Naive thymus-derived CD4-positive, alpha-beta T cell (primary cell): ENCODE measurements at regions of chr16 and their contacts with region 1.

Region 1: GRCh38 chr16:69754469-69755310 is at the start of gene NOB1:
- DNase-seq: peak; percentile 96 to 98 (median 97)
- ATAC-seq: peak; percentile 97
- H3K4me3 ChIP-seq: peak within 1 kb of the TSS; percentile 91
- H3K4me3 Mint-ChIP-seq: peak within 1 kb of the TSS; percentile 98 to 100 (median 100)
- H3K27ac ChIP-seq: peak within 1 kb of the TSS; percentile 89
- H3K27ac Mint-ChIP-seq: peak within 1 kb of the TSS; percentile 92 to 100 (median 98)
- H3K4me1 ChIP-seq: peaks cover 13 to 17% of the 10 kb centered on the region in 2 donors
- H3K4me1 Mint-ChIP-seq: peaks cover 23 to 36% (median 26%) of the 10 kb centered on the region in 7 donors
- H3K27me3 ChIP-seq: no peaks in the 10 kb centered on the region
- H3K27me3 Mint-ChIP-seq: peaks cover 0 to 7% (median 0%) of the 10 kb centered on the region in 5 donors
- total RNA-seq, gene NOB1: 24.1 to 72.8 (median 45.0) TPM

Region 2: GRCh38 chr16:69339289-69340108 is 415.2 kb before region 1 on chr16 and contains the starts of genes COG8 and NIP7:
- CTCF ChIA-PET with region 1: no interaction called
- POLR2A ChIA-PET with region 1: no interaction called
- intact Hi-C with region 1: loop called in 1 of 2 experiments (anchors 1 kb)
- DNase-seq: peak; percentile 78 to 91 (median 90)
- ATAC-seq: peak; percentile 95
- H3K4me3 ChIP-seq: peak within 1 kb of the TSS; percentile 80
- H3K4me3 Mint-ChIP-seq: peak within 1 kb of the TSS; percentile 97 to 100 (median 99)
- H3K27ac ChIP-seq: peak within 1 kb of the TSS; percentile 86
- H3K27ac Mint-ChIP-seq: peak within 1 kb of the TSS; percentile 95 to 99 (median 98)
- H3K4me1 ChIP-seq: peaks cover 20 to 25% of the 10 kb centered on the region in 2 donors
- H3K4me1 Mint-ChIP-seq: peaks cover 31 to 70% (median 49%) of the 10 kb centered on the region in 7 donors
- H3K27me3 ChIP-seq: no peaks in the 10 kb centered on the region
- H3K27me3 Mint-ChIP-seq: no peaks in the 10 kb centered on the region
- total RNA-seq, gene COG8: 29.5 to 73.7 (median 37.4) TPM
- total RNA-seq, gene NIP7: 22.1 to 40.9 (median 30.3) TPM

Region 3: DNA sequence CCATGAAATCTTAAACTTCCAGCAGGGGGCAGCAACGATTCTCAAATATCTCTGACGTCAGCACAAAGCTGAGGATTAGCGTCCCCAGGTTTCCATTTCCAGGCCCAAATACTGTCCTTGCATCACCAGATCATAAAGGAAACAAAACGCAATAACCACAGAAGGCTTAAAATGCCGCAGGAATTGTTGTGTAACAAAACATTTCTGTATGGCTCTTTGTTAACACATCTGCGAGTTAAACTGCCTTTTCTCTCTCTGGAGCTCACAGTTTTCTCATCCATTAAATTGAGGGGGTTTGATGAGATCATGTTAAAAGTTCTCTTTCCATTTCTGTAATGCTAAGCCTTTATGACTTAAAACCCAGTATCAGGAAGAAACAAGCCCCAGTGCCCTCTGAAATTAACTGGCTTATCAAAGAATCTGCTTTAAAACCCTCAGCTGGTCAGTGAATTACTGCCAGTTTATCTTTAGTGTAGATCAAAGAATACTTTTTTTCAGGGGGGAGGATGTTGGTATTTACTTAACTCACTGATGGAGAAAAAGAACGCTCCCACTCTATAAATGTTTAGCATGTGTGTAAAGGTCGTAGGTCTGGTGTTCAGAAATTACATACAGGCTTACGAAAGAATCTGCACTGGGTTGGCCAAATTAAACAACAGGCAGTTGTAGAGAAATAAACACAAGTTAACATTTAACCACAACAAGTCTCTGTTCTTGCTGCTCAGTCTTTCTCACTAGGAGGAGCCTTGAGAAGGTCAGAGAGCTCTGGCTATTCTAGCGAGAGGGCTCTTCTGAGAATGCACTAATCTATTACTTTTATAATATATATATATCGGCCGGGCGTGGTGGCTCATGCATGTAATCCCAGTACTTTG is 358.3 kb before region 1 on chr16:
- CTCF ChIA-PET with region 1: interaction called, 9 read pairs
- POLR2A ChIA-PET with region 1: interaction called, 8 read pairs
- intact Hi-C with region 1: loop called in 1 of 2 experiments (anchors 1 kb)
- DNase-seq: peak; percentile 23 to 73 (median 66)
- ATAC-seq: peak; percentile 86
- H3K4me3 ChIP-seq: no peak overlapping the region
- H3K4me3 Mint-ChIP-seq: peak overlapping the region in 3 of 10 donors; percentile 26 to 57 (median 50)
- H3K27ac ChIP-seq: peak overlapping the region; percentile 22
- H3K27ac Mint-ChIP-seq: peak overlapping the region; percentile 8 to 76 (median 41)
- H3K4me1 ChIP-seq: peaks cover 0 to 3% of the 10 kb centered on the region in 2 donors
- H3K4me1 Mint-ChIP-seq: peaks cover 0 to 17% (median 5%) of the 10 kb centered on the region in 7 donors
- H3K27me3 ChIP-seq: no peaks in the 10 kb centered on the region
- H3K27me3 Mint-ChIP-seq: peaks cover 0 to 11% (median 0%) of the 10 kb centered on the region in 5 donors

Region 4: GRCh38 chr16:69424053-69424934 is 330.4 kb before region 1 on chr16 and contains the start of gene CYB5B:
- CTCF ChIA-PET with region 1: no interaction called
- POLR2A ChIA-PET with region 1: no interaction called
- intact Hi-C with region 1: loop called (anchors 1 to 10 kb)
- DNase-seq: peak; percentile 72 to 98 (median 96)
- ATAC-seq: peak; percentile 98
- H3K4me3 ChIP-seq: peak within 1 kb of the TSS; percentile 84
- H3K4me3 Mint-ChIP-seq: peak within 1 kb of the TSS; percentile 92 to 99 (median 97)
- H3K27ac ChIP-seq: peak within 1 kb of the TSS; percentile 83
- H3K27ac Mint-ChIP-seq: peak within 1 kb of the TSS; percentile 89 to 98 (median 93)
- H3K4me1 ChIP-seq: peaks cover 0 to 13% of the 10 kb centered on the region in 2 donors
- H3K4me1 Mint-ChIP-seq: peaks cover 12 to 49% (median 37%) of the 10 kb centered on the region in 7 donors
- H3K27me3 ChIP-seq: no peaks in the 10 kb centered on the region
- H3K27me3 Mint-ChIP-seq: no peaks in the 10 kb centered on the region
- total RNA-seq, gene CYB5B: 29.6 to 148 (median 48.2) TPM

Region 5: GRCh38 chr16:69703638-69704037 is 51.1 kb before region 1 on chr16:
- CTCF ChIA-PET with region 1: interaction called, 43 read pairs
- POLR2A ChIA-PET with region 1: interaction called, 23 read pairs
- intact Hi-C with region 1: no loop called
- DNase-seq: no peak
- ATAC-seq: no peak
- H3K4me3 ChIP-seq: no peak overlapping the region
- H3K4me3 Mint-ChIP-seq: no peak overlapping the region
- H3K27ac ChIP-seq: no peak overlapping the region
- H3K27ac Mint-ChIP-seq: peak overlapping the region in 4 of 9 donors; percentile 2 to 12 (median 6)
- H3K4me1 ChIP-seq: no peaks in the 10 kb centered on the region
- H3K4me1 Mint-ChIP-seq: peaks cover 0 to 4% (median 0%) of the 10 kb centered on the region in 7 donors
- H3K27me3 ChIP-seq: no peaks in the 10 kb centered on the region
- H3K27me3 Mint-ChIP-seq: no peaks in the 10 kb centered on the region

Region 6: GRCh38 chr16:69709456-69710084 is 45.1 kb before region 1 on chr16:
- CTCF ChIA-PET with region 1: interaction called, 43 read pairs
- POLR2A ChIA-PET with region 1: interaction called, 23 read pairs
- intact Hi-C with region 1: loop called (anchors 1 kb)
- DNase-seq: peak in 7 of 9 donors; percentile 35 to 67 (median 59)
- ATAC-seq: peak; percentile 78
- H3K4me3 ChIP-seq: no peak overlapping the region
- H3K4me3 Mint-ChIP-seq: no peak overlapping the region
- H3K27ac ChIP-seq: no peak overlapping the region
- H3K27ac Mint-ChIP-seq: peak overlapping the region in 6 of 9 donors; percentile 16 to 61 (median 56)
- H3K4me1 ChIP-seq: no peaks in the 10 kb centered on the region
- H3K4me1 Mint-ChIP-seq: peaks cover 0 to 6% (median 0%) of the 10 kb centered on the region in 7 donors
- H3K27me3 ChIP-seq: no peaks in the 10 kb centered on the region
- H3K27me3 Mint-ChIP-seq: no peaks in the 10 kb centered on the region

Region 7: DNA sequence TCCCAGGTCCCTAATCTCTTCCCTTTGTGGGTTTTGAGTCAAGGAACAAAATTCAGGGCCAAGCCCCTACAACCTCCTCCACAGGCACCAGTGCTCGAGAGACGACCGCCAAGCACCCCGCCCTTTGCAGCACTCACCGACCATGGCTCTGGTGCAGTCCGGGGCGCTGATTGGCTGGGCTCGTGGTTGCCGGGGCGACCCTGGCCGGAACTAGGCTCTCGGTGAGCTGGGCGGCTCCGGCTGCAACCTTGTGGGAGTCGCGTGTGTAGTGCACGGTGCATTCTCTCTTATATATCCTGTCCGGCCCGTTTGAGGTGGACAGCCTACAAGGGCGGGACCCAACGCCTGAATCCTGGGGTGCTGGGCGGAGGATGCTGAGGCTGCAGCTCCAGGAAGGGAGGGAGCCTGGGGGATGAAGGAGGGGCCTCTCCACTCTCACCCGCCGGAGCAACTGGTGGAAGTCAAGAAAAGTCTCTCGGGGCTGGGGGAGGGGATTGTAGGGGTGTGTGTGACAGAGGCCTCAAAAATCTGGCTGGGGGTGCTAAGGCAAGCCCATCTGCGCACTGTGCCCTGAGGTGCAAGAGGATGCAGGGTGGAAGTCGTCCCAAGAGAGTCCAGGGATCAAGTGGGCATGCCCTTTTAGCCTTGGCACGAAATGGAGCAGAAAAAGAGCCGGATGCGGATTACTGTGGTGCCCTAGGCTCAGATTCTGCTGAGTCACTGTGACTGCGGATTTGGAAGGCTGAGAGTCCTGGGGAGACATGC is 28.2 kb before region 1 on chr16 and contains the start of gene NQO1:
- CTCF ChIA-PET with region 1: interaction called, 18 read pairs
- POLR2A ChIA-PET with region 1: interaction called, 49 read pairs
- intact Hi-C with region 1: loop called (anchors 1 kb)
- DNase-seq: peak; percentile 62 to 90 (median 78)
- ATAC-seq: peak; percentile 98
- H3K4me3 ChIP-seq: peak within 1 kb of the TSS; percentile 79
- H3K4me3 Mint-ChIP-seq: peak within 1 kb of the TSS; percentile 86 to 96 (median 95)
- H3K27ac ChIP-seq: peak within 1 kb of the TSS; percentile 57
- H3K27ac Mint-ChIP-seq: peak within 1 kb of the TSS; percentile 72 to 95 (median 86)
- H3K4me1 ChIP-seq: peaks cover 10 to 18% of the 10 kb centered on the region in 2 donors
- H3K4me1 Mint-ChIP-seq: peaks cover 15 to 57% (median 27%) of the 10 kb centered on the region in 7 donors
- H3K27me3 ChIP-seq: no peaks in the 10 kb centered on the region
- H3K27me3 Mint-ChIP-seq: no peaks in the 10 kb centered on the region
- total RNA-seq, gene NQO1: 1.7 to 27.3 (median 3.2) TPM